Adrenal gland (tissue), 19 donors: ENCODE measurements at regions of chr15 and their contacts with region 1.

Region 1: GRCh38 chr15:59917504-59918157 is 86.5 kb upstream of the FOXB1 start:
- DNase-seq: peak; percentile 49 to 64 (median 60)
- H3K4me3 ChIP-seq: no peak overlapping the region
- H3K27ac ChIP-seq: no peak overlapping the region
- H3K4me1 ChIP-seq: no peaks in the 10 kb centered on the region
- H3K27me3 ChIP-seq: peaks cover 6% of the 10 kb centered on the region
- CTCF ChIP-seq: peak; percentile 20 to 53 (median 48)
- POLR2A ChIP-seq: no peak

Region 2: DNA sequence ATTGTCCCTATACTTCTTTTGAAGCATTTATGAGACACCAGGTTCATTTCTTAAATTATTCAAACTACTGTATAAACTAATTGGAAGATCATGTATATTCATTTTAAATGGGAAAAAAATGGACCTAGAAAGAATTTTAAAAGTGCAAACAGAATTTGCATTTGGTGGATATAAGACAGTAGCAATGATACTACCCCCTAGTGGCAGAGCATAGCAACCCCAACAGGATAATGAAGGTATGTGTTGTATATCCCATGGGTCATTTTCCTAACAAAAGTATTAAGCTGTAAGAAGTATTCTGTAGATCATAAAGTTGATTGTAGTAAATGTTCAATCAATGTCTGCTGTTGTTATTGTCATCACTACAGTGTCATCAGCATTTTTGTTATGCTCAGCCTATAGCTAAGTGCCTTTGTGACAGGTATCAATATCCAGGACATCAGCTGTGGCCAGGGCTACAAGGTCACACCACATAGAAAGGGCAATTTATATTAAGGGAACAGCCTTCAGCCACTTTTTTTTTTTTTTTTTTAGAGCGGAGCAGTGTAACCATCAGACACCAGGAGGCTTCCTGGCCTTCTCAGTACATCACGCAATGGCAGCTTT is 262.3 kb after region 1 on chr15:
- intact Hi-C with region 1: loop called in 1 of 2 experiments (anchors 10 kb)
- DNase-seq: peak in 6 of 7 donors; percentile 20 to 59 (median 38)
- H3K4me3 ChIP-seq: no peak overlapping the region
- H3K27ac ChIP-seq: no peak overlapping the region
- H3K4me1 ChIP-seq: peaks cover 0 to 3% of the 10 kb centered on the region in 2 donors
- H3K27me3 ChIP-seq: peaks cover 7% of the 10 kb centered on the region
- CTCF ChIP-seq: peak; percentile 52 to 83 (median 72)
- POLR2A ChIP-seq: no peak